BJ (cell line): ENCODE measurements at regions of chr20 and their contacts with region 1.

Region 1: DNA sequence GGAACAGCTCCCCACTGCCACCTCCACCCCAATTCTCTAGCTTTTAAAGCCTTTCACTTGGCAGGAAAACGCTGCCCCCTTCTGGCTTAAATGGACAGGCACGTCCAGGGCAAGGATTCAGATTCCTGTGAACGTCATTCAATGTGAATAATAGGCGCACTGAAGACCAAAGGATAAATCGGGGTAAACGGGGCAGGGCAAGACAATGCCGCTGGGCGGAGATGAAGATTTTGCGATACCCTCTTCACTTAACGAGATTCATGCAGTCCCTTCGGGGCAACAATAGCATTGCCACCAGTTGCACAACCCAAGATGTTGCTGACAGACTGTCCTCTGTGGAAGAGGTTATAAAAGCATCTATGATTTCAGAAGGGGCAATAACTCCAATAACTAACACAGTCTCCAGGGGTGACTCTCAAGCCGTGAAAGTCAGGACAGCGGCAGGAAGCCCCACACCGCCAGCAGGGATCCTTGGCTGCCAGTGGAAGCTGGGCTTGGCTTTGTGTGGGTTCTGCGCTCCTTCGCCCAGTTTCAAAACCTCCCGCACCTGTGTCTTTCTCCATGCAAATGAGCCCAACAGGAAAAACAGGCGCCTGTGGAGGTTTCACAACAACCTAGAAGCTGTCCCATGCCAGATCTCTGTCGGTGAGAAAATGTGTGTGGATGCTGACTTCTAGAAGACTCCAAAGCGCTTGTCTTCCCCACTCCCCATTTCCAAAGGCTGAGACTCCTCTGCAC is 291.8 kb downstream of the BMP7 start:
- DNase-seq: peak; percentile 15
- H3K4me3 ChIP-seq: no peak overlapping the region
- H3K27me3 ChIP-seq: peaks cover 6% of the 10 kb centered on the region
- CTCF ChIP-seq: peak; percentile 83

Region 2: GRCh38 chr20:56629670-56630478 is 344.8 kb before region 1 on chr20:
- CTCF ChIA-PET with region 1: interaction called, 64 read pairs
- POLR2A ChIA-PET with region 1: no interaction called
- DNase-seq: no peak
- H3K4me3 ChIP-seq: peak overlapping the region; percentile 63
- H3K27me3 ChIP-seq: peaks cover 3% of the 10 kb centered on the region; the same call in 1 of the 2 replicates
- CTCF ChIP-seq: peak; percentile 90

Region 3: DNA sequence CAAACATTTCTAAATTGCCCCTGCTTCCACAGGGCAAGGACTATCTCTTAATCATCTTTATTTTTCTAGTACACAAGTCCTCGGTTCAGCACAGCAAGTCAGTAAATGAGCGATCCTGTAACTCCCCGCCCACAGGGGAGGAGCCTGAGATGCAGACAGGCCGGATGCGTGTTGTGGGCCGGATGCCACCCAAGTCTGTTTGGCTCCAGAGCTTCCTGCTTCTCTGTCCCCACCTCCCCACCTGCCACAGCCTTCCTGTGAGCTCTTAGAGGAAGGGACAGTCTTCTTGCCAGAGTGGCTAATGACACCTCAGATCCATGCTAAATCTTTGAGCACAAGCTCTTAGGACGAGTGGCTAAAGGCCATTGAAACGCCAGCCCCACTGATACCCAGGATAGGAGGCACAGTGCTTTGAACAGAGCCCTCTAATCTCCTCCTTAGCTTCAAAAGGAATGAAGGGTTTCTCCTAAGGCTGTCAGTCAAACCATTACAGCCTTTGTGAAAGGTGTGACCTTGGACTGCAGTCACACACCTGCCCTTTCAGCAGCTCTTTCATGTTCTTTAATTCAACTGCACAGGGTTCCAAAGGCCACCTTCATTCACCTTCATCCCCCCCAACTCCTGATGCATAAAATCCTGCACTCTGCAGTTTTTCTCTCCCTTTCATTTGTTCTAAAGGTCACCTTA is 81.3 kb before region 1 on chr20:
- CTCF ChIA-PET with region 1: no interaction called
- POLR2A ChIA-PET with region 1: no interaction called
- DNase-seq: no peak
- H3K4me3 ChIP-seq: no peak overlapping the region
- H3K27me3 ChIP-seq: no peaks in the 10 kb centered on the region
- CTCF ChIP-seq: no peak

Region 4: GRCh38 chr20:56925082-56925830 is 49.4 kb before region 1 on chr20:
- CTCF ChIA-PET with region 1: no interaction called
- POLR2A ChIA-PET with region 1: no interaction called
- DNase-seq: no peak
- H3K4me3 ChIP-seq: no peak overlapping the region; the same call in 1 of the 2 replicates
- H3K27me3 ChIP-seq: peaks cover 13% of the 10 kb centered on the region
- CTCF ChIP-seq: no peak

Region 5: DNA sequence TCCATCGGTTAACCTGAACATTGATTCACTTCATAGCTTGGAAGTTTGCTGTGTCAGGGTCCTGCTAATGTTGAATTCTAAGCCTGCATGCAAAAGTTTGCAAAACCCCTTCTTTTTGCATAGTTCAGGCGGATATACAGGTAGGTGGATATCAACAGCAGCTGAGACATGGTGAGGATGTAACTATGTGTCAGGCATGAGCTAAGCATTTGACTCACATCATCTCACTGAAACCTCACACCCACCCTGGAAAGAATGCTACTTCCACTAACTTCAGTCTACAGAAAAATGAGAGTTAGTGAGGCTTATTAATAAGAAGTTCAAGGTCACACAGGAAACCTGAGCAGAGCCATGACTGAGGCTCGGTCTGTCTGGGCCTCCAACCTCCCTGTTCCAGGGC is 14.8 kb after region 1 on chr20:
- CTCF ChIA-PET with region 1: interaction called, 12 read pairs
- POLR2A ChIA-PET with region 1: no interaction called
- DNase-seq: no peak
- H3K4me3 ChIP-seq: no peak overlapping the region
- H3K27me3 ChIP-seq: 0 out of 2 replicates have a peak, but pooled peaks cover 2% of the 10 kb centered on the region
- CTCF ChIP-seq: no peak

Region 6: DNA sequence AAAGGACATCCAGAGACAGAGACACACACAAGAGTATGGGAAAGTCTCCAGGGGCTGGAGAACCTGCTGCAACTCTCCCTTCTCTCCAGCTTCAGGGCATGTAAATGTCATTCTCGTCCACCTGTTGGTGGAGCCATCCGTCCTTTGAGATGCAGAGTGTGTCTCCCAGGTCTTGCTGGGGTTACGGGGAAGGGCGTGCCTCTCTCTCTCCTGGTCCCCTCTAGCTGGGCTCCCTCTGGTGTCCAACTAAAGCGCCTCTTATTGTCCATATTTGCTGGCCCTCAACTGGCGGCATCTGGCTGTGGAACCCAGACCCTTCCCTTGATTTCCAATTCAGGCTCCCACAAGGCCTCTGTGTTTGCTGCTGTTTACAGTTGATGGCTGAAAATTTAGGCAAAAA is 47.6 kb after region 1 on chr20:
- CTCF ChIA-PET with region 1: no interaction called
- POLR2A ChIA-PET with region 1: no interaction called
- DNase-seq: no peak
- H3K4me3 ChIP-seq: no peak overlapping the region
- H3K27me3 ChIP-seq: no peaks in the 10 kb centered on the region
- CTCF ChIP-seq: no peak

Region 7: DNA sequence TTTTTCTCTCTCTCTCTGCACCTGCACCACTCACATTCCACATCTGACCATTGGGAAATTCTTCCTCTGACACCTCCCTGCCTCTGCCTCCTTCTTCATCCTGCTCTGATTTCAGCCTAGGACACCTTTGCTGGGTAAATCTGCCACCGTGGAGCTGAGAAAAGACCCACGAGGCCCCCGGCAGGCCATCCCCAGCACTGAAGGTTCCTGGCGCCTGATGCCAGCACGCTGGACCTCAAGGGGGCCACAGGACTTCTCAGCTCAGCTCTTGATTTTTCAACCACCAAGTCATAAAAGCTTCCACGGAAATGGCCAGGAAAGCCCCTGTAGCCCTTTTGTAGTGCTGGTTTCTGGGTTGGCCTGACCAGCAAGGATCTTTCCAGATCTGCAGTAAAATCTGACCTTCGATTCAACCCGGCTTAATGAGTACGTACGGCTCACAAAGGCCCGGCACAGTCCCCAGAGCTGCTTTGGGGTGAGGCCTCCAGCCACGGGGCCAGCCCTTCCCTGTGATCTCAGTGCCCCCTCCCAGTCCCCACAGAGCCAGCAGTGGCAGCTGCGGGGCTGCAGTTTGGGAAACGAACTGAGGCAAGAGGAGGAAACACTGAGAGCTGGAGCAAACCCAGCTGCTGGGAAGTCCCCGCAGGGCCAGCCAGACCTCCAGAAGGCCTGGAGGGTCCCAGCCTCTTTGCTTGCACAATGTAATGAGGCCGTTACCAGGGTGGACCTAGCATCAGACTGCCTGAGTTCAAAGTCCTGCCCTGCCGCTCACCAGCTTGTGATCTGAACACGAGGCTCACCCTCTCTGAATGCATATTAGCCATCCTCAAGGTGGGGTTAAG is 134.3 kb after region 1 on chr20:
- CTCF ChIA-PET with region 1: no interaction called
- POLR2A ChIA-PET with region 1: no interaction called
- DNase-seq: no peak
- H3K4me3 ChIP-seq: no peak overlapping the region
- H3K27me3 ChIP-seq: peaks cover 4% of the 10 kb centered on the region; the same call in 1 of the 2 replicates
- CTCF ChIP-seq: no peak